Tibial artery (tissue), 4 donors: ENCODE measurements at regions of chr15 and their contacts with region 1.

Region 1: DNA sequence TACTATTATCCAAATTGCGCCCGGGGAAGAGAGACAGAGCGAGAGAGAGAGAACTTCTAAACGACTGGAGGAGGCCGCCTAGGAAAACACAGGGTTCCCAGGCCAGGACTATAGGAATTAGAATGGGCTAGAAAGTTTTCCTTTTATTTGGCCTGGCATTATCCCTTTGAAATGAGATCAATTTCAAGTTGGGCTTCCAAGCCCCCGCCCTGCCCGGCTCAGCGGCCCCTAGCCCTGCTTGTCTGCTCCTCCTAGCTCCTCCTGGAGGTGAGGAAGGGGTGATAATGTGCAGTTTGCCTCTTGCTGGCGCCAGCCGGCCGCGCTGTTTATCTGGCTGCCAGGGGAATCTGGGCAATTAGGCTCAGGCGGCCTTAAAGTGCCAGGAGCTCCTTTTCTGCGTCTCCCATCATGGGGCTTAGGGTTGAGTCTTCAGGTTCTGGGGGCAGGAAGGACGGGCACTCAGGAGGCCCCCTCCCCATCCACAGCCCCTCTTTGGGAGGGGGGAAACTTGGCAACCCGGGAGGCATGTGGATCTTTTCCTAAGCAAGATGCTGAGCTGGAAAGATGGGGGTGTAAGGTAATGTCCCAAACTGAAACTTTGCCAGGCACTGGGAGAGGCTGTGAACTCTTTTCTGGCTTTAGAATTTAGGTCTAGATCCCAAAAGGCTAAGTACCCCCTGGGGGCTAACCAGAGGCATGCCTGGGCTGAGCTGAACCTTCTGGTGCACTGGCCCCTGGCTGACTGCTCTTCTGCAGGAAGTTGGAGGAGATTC is 5.5 kb downstream of the SMAD6 start:
- DNase-seq: peak in 1 of 2 donors; percentile 81
- H3K4me3 ChIP-seq: peak overlapping the region; percentile 78 to 84
- H3K27ac ChIP-seq: peak overlapping the region; percentile 75 to 86
- H3K4me1 ChIP-seq: peaks cover 0 to 78% (median 46%) of the 10 kb centered on the region in 4 donors
- H3K27me3 ChIP-seq: no peaks in the 10 kb centered on the region
- CTCF ChIP-seq: peak in 1 of 2 experiments; percentile 12

Region 2: GRCh38 chr15:66774001-66774814 is 66.7 kb after region 1 on chr15:
- intact Hi-C with region 1: loop called (anchors 5 kb)
- DNase-seq: peak; percentile 87 to 95
- H3K4me3 ChIP-seq: no peak overlapping the region
- H3K27ac ChIP-seq: peak overlapping the region; percentile 69 to 77
- H3K4me1 ChIP-seq: peaks cover 5 to 83% (median 29%) of the 10 kb centered on the region in 4 donors
- H3K27me3 ChIP-seq: no peaks in the 10 kb centered on the region
- CTCF ChIP-seq: peak; percentile 98 to 99

Region 3: GRCh38 chr15:66997212-66997611 is 289.7 kb after region 1 on chr15:
- intact Hi-C with region 1: no loop called
- DNase-seq: no peak
- H3K4me3 ChIP-seq: no peak overlapping the region
- H3K27ac ChIP-seq: no peak overlapping the region
- H3K4me1 ChIP-seq: peaks cover 0 to 10% (median 1%) of the 10 kb centered on the region in 4 donors
- H3K27me3 ChIP-seq: no peaks in the 10 kb centered on the region
- CTCF ChIP-seq: no peak